ENCODE measurements at regions of chr1 and their contacts with region 1.

Region 1: GRCh38 chr1:9629445-9630201 is 21.9 kb upstream of the PIK3CD start:
- DNase-seq: peak; percentile 85
- ATAC-seq: peak; percentile 48
- H3K4me3 Mint-ChIP-seq: peak overlapping the region; percentile 92
- H3K27ac Mint-ChIP-seq: peak overlapping the region; percentile 97
- H3K4me1 Mint-ChIP-seq: peaks cover 46% of the 10 kb centered on the region
- H3K27me3 Mint-ChIP-seq: no peaks in the 10 kb centered on the region

Region 2: DNA sequence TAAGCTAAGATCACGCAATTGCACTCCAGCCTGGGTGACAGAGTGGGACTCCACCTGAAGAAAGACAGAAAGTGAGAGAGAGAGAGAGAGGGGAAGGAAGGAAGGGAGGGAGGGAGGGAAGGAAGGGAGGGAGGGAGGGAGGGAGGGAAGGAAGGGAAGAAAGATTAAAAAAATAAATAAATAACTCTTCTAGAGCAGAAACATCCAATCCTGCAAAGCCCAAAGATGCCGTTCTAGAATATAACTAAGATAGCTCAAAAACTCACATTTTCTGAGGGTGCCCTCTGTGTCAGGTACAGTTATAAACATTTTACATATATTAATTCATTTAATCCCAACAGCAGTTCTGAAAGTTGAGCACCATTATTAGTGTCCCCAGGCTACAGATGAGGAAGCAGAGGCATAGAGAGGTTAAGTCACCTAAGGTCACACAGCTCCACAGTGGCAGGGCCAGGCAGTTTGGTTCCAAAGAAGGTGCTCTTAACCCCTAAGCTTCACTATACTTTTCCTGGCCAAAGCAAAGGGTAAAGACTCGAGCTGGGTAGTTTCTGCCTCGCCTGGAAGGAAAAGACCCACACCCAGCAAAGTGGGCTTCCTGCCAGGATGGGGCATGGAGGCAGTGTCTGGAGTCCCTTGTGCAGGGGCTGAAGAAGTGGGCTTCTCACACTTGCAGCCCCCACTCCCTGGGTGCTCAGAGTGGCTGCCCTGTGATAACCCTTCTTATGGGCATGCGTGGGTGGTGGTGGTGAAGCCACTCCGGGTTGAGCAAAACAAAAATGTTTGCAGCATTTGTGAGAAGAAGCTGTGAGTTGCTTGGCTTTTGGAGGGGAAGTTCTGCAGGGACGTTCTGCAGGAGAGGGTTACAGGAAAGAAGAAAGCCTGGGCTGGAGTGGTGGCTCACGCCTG is 14.0 kb after region 1 on chr1:
- POLR2A ChIA-PET with region 1: interaction called, 623 read pairs
- DNase-seq: no peak
- ATAC-seq: peak; percentile 19
- H3K4me3 Mint-ChIP-seq: peak overlapping the region; percentile 47
- H3K27ac Mint-ChIP-seq: peak overlapping the region; percentile 88
- H3K4me1 Mint-ChIP-seq: peaks cover 51% of the 10 kb centered on the region
- H3K27me3 Mint-ChIP-seq: no peaks in the 10 kb centered on the region

Region 3: GRCh38 chr1:9651565-9652378 is 22.1 kb after region 1 on chr1 and contains the start of gene PIK3CD:
- POLR2A ChIA-PET with region 1: interaction called, 623 read pairs
- DNase-seq: peak; percentile 74
- ATAC-seq: peak; percentile 41
- H3K4me3 Mint-ChIP-seq: peak within 1 kb of the TSS; percentile 97
- H3K27ac Mint-ChIP-seq: peak within 1 kb of the TSS; percentile 97
- H3K4me1 Mint-ChIP-seq: peaks cover 40% of the 10 kb centered on the region
- H3K27me3 Mint-ChIP-seq: no peaks in the 10 kb centered on the region
- total RNA-seq, gene PIK3CD: 250 TPM

Region 4: GRCh38 chr1:9689011-9689706 is 59.5 kb after region 1 on chr1:
- POLR2A ChIA-PET with region 1: interaction called, 90 read pairs
- DNase-seq: peak; percentile 94
- ATAC-seq: peak; percentile 74
- H3K4me3 Mint-ChIP-seq: peak overlapping the region; percentile 82
- H3K27ac Mint-ChIP-seq: peak overlapping the region; percentile 80
- H3K4me1 Mint-ChIP-seq: peaks cover 60% of the 10 kb centered on the region
- H3K27me3 Mint-ChIP-seq: no peaks in the 10 kb centered on the region

Region 5: DNA sequence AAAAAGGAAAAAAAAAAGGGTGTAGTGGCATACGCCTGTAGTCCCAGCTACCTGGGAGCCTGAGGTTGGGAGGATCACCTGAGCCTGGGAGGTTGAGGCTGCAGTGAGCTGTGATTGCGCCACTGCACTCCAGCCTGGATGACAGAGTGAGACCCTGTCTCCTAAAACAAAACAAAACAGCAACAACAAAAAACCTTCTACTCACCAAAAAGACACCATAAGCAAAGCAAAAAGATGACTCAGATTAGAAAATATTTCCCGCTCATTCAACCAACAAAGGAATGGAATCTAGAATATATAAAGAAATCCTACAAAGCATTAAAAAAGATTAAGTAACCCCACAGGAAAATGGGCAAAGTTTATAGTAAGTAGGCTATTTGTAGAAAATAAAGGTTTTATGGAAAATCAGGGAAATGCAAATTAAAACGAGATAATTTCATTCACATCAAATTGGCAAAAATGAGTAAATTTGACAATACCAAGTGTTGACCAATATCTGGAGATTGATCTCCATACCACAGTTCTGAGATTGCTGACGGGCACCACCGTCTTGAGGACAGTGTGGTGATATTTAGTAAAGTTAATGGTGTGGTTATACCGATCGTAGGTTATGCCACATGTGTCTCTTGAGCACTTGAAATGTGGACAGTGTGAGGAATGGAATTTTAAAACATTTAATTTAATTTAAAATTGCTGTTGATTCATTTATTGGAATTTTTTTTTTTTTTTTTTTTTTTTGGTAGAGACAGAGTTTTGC is 75.9 kb after region 1 on chr1:
- POLR2A ChIA-PET with region 1: interaction called, 10 read pairs
- DNase-seq: no peak
- ATAC-seq: no peak
- H3K4me3 Mint-ChIP-seq: peak overlapping the region; percentile 6
- H3K27ac Mint-ChIP-seq: peak overlapping the region; percentile 70
- H3K4me1 Mint-ChIP-seq: peaks cover 58% of the 10 kb centered on the region
- H3K27me3 Mint-ChIP-seq: no peaks in the 10 kb centered on the region

Region 6: DNA sequence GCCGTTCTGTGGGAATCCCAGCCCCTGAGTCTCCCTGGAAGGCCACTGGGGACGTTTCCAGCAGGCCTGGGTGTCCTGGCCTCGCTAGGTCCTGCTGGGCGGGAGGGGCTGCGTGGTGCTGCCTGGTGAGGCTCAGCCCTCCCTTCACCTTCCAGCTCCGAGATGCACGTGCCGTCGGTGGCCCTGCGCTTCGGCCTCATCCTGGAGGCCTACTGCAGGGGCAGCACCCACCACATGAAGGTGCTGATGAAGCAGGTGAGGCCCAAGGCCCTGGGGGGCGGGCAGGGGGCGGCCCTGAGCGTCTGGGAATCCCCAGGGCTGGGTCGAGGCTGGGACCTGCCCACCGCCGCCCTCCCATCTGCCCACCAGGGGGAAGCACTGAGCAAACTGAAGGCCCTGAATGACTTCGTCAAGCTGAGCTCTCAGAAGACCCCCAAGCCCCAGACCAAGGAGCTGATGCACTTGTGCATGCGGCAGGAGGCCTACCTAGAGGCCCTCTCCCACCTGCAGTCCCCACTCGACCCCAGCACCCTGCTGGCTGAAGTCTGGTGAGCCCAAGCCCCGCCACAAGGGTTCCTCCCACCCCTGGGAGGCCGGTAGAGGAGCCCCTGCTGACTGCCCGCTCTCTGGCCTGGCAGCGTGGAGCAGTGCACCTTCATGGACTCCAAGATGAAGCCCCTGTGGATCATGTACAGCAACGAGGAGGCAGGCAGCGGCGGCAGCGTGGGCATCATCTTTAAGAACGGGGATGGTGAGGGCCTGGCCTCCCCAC is 92.2 kb after region 1 on chr1:
- POLR2A ChIA-PET with region 1: interaction called, 346 read pairs
- DNase-seq: peak; percentile 84
- ATAC-seq: peak; percentile 21
- H3K4me3 Mint-ChIP-seq: peak overlapping the region; percentile 68
- H3K27ac Mint-ChIP-seq: peak overlapping the region; percentile 81
- H3K4me1 Mint-ChIP-seq: peaks cover 53% of the 10 kb centered on the region
- H3K27me3 Mint-ChIP-seq: no peaks in the 10 kb centered on the region

Region 7: DNA sequence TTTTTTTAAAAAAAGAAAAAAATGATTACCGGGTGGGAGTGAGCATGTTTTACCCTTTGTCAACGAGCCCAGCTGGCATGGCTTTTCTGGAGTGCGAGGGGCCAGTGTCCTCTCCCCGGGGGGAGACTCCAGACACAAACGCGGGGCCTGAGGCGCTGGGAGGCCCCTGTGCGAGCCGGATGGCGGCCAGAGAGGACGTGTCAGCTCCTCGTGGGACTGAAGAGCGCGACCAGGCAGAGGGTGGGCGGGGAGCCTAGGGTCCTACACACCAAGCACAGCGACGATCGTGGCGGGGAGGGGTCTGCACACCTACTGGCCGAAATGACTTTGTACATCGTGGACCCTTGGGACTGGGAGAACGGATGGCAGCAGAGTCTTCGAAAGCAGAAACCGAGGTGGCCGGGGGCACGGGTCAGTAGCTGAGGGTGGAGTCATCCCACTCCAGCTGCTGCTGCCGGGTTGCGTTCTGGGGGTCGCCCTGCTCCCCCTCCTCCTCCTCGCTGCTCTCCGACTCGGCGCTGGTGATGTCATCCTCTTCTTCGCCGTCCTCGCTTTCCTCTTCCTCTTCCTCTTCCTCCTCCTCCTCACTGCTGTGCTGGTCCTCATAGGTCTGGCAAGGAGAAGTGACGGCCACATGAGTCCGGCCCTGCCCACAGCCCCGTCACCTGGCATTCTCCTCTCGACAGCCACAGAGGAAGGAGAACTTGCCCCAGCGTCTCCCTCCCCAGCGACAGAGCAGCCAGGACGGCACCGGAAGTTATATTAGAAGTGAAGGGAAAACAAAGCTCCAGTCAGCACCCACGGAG is 100.7 kb after region 1 on chr1:
- POLR2A ChIA-PET with region 1: interaction called, 16 read pairs
- DNase-seq: no peak
- ATAC-seq: no peak
- H3K4me3 Mint-ChIP-seq: peak overlapping the region; percentile 46
- H3K27ac Mint-ChIP-seq: peak overlapping the region; percentile 81
- H3K4me1 Mint-ChIP-seq: peaks cover 53% of the 10 kb centered on the region
- H3K27me3 Mint-ChIP-seq: no peaks in the 10 kb centered on the region

Measured in activated naive CD8-positive, alpha-beta T cell treated with anti-CD3 and anti-CD28 coated beads, Interleukin-2, amount 10 ng/mL, durations not matched to agents 7 days and 5 days (primary cell).